ENCODE measurements at regions of chr1 and their contacts with region 1.

Region 1: GRCh38 chr1:45569962-45570581 is 13.8 kb upstream of the NASP start:
- DNase-seq: peak in 2 of 3 donors; percentile 47 to 73
- ATAC-seq: peak; percentile 86 to 95 (median 90)
- H3K4me3 ChIP-seq: no peak overlapping the region
- H3K27ac ChIP-seq: no peak overlapping the region
- H3K4me1 ChIP-seq: no peaks in the 10 kb centered on the region
- H3K27me3 ChIP-seq: no peaks in the 10 kb centered on the region
- CTCF ChIP-seq: peak; percentile 95 to 98 (median 98)
- POLR2A ChIP-seq: no peak

Region 2: DNA sequence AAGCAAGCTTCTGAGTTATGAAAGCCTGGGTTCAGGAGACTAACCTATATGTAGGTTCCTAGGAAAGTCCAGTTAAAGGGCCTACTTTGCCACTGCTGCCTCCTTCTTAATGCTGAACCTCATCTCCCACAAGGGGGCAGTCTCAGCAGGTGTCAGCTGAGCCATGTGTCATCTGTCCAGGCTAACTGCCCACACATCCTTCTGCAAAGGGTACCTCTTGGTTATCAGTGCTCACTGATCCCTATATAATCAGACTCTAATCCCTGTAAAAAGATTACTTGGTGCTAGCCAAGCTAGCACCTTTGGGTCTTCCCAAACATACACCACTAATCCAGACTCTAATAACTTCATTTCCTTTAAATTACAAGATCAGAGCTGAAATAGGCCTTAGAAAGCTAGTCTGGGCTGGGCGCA is 57.4 kb before region 1 on chr1:
- intact Hi-C with region 1: loop called (anchors 5 kb)
- DNase-seq: peak in 2 of 3 donors; percentile 51 to 69
- ATAC-seq: peak; percentile 68 to 85 (median 80)
- H3K4me3 ChIP-seq: no peak overlapping the region
- H3K27ac ChIP-seq: no peak overlapping the region
- H3K4me1 ChIP-seq: peaks cover 0 to 40% (median 15%) of the 10 kb centered on the region in 4 donors
- H3K27me3 ChIP-seq: no peaks in the 10 kb centered on the region
- CTCF ChIP-seq: peak; percentile 72 to 84 (median 77)
- POLR2A ChIP-seq: no peak

Measured in right lobe of liver (tissue), 6 donors.